OCI-LY7 (cell line): ENCODE measurements at regions of chr9 and their contacts with region 1.

Region 1: GRCh38 chr9:37485389-37486219 is at the start of gene POLR1E:
- DNase-seq: peak; percentile 98
- H3K4me3 ChIP-seq: peak within 1 kb of the TSS; percentile 86
- H3K27ac ChIP-seq: peak within 1 kb of the TSS; percentile 51
- H3K4me1 ChIP-seq: peaks cover 36% of the 10 kb centered on the region
- CTCF ChIP-seq: no peak
- total RNA-seq, gene POLR1E: 41.0 and 44.3 TPM in 2 replicates

Region 2: DNA sequence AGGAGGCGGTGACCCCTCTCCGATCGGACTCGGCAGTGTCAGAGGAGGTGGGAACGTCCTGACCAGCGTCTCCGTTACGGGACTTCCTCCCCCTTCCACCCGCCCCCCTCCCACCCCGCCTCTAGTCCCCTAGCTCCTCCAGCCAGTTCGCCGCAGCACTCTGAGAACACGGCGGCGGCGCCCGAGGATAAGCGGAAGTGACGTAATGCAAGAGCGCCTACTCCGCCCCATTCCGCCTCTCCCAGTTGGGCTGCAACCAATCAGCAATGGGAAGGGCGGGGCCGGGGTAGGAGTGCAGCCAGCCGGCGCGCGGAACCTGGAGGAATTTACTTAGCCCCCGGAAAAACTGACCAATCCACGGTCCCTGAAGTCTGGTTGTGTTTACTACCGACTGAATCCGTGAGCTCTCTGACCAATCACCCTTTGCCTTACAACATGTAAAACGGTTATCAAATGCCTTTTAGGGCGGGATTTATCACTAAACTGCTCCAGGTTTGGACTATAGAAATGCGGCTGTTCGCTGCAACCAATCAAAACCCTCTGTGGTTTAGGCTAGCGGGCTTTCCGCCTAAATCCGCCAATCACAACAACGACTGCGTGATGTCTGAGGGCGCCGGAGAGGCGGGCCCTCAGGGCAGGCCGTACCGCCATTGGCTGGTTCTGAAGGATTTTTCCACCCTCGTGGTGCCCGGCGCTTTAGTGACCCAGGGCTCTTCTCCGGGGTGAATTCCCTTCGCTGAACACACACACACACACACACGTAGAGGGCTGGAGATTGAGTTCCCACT is 20.2 kb before region 1 on chr9 and contains the start of gene ZBTB5:
- CTCF ChIA-PET with region 1: interaction called, 7 read pairs
- POLR2A ChIA-PET with region 1: interaction called, 10 read pairs
- intact Hi-C with region 1: no loop called
- DNase-seq: peak; percentile 100
- H3K4me3 ChIP-seq: peak within 1 kb of the TSS; percentile 89
- H3K27ac ChIP-seq: peak within 1 kb of the TSS; percentile 74
- H3K4me1 ChIP-seq: peaks cover 38% of the 10 kb centered on the region
- CTCF ChIP-seq: no peak
- total RNA-seq, gene ZBTB5: 27.9 and 31.9 TPM in 2 replicates

Region 3: DNA sequence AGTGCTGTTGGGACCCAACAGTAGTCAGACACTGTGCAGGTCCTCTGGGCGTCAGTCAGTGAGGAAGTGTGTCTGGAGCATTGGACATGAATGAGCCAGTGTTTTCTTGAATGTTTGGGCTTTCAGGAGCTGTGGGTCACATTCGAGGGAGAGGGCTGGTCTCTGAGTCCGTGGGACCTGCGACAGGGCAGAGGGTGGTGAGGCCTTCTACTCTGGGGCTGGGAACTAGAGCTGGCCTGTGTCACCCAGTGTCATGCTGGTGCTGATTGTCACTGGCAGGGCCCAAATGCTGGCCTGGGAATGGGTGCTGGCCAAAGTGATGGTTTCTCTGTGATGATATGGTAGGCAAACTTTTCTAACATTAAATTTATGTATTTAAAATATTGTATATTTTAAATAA is 10.4 kb after region 1 on chr9:
- CTCF ChIA-PET with region 1: interaction called, 3 read pairs
- POLR2A ChIA-PET with region 1: interaction called, 10 read pairs
- intact Hi-C with region 1: no loop called
- DNase-seq: no peak
- H3K4me3 ChIP-seq: no peak overlapping the region
- H3K27ac ChIP-seq: no peak overlapping the region
- H3K4me1 ChIP-seq: no peaks in the 10 kb centered on the region
- CTCF ChIP-seq: no peak

Region 4: DNA sequence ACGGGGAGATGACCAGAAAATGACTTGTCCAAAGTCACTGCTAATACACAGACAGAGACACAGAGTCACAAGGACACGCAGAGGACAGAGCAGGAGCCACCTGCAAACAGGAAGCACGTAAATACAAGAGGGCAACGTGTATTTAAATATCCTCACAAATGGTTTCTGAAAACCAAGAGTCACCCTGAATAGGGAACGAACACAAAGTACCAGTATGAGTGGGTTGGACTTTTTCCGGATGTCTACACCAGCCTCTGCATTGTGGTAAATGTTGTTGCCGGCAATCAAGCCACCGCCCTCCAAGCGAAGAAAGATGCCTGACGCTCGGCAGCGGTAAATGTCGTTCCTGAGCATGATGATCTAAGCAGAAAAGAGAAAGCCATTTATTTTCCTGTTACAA is 46.1 kb after region 1 on chr9:
- CTCF ChIA-PET with region 1: no interaction called
- POLR2A ChIA-PET with region 1: interaction called, 4 read pairs
- intact Hi-C with region 1: loop called (anchors 5 kb)
- DNase-seq: peak; percentile 55
- H3K4me3 ChIP-seq: peak overlapping the region; percentile 21
- H3K27ac ChIP-seq: peak overlapping the region; percentile 33
- H3K4me1 ChIP-seq: peaks cover 29% of the 10 kb centered on the region
- CTCF ChIP-seq: no peak

Region 5: GRCh38 chr9:37592108-37592951 is 106.7 kb after region 1 on chr9 and contains the start of gene TOMM5:
- CTCF ChIA-PET with region 1: interaction called, 3 read pairs
- POLR2A ChIA-PET with region 1: interaction called, 5 read pairs
- intact Hi-C with region 1: loop called (anchors 5 kb)
- DNase-seq: peak; percentile 89
- H3K4me3 ChIP-seq: peak within 1 kb of the TSS; percentile 78
- H3K27ac ChIP-seq: peak within 1 kb of the TSS; percentile 52
- H3K4me1 ChIP-seq: peaks cover 47% of the 10 kb centered on the region
- CTCF ChIP-seq: no peak
- total RNA-seq, gene TOMM5: 215 and 231 TPM in 2 replicates

Region 6: DNA sequence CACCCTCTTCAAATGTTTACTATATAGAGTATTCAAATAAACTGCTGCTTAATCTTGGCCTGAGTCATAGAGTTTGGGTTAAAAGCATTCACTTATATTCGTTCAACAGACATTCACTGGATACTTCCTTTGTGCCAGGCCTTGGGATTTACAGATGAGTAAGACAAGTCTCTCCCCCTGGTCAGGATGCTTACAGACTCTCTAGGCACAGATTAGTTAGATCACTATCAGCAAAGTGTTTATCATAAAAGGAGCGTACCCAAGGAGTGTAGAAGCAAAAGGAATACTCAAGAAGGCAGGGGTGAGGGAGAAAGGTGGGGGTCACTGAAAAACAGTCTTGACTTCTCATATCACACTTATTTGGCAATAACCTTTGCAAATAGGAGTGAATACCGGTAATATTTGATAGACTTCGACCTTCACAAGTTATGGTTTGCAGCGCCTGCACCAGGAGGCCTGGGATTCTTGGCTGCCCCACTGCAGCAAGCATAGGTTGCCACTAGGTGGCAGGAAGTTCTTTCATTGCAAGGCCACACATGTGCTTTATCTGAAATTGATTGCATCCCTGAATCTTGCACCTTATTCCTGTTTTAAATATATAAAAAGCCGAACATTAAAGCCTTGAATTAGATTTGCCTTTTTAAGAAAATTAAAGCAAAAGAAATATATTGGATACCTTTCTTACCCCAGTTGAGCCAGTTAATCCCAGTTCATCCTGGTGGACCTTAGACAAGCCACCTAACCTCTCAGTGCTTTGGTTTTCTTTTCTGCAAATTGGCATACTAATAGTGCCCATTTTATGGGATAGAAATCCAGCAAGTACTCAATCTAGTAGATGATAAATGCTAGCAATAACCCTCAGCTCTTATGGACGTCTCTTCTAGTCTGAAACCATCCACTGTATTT is 261.5 kb after region 1 on chr9:
- CTCF ChIA-PET with region 1: no interaction called
- POLR2A ChIA-PET with region 1: no interaction called
- intact Hi-C with region 1: loop called (anchors 5 kb)
- DNase-seq: peak; percentile 75
- H3K4me3 ChIP-seq: no peak overlapping the region
- H3K27ac ChIP-seq: no peak overlapping the region
- H3K4me1 ChIP-seq: no peaks in the 10 kb centered on the region
- CTCF ChIP-seq: peak; percentile 99

Region 7: GRCh38 chr9:37903647-37904444 is 418.2 kb after region 1 on chr9 and contains the start of gene SLC25A51:
- CTCF ChIA-PET with region 1: no interaction called
- POLR2A ChIA-PET with region 1: no interaction called
- intact Hi-C with region 1: loop called (anchors 5 kb)
- DNase-seq: peak; percentile 97
- H3K4me3 ChIP-seq: peak within 1 kb of the TSS; percentile 94
- H3K27ac ChIP-seq: peak within 1 kb of the TSS; percentile 73
- H3K4me1 ChIP-seq: peaks cover 24% of the 10 kb centered on the region
- CTCF ChIP-seq: peak; percentile 92
- total RNA-seq, gene SLC25A51: 20.1 and 31.8 TPM in 2 replicates